OCI-LY7 (cell line): ENCODE measurements at regions of chr7 and their contacts with region 1.

Region 1: GRCh38 chr7:25125137-25125946 is at the start of gene CYCS:
- DNase-seq: peak; percentile 100
- H3K4me3 ChIP-seq: peak within 1 kb of the TSS; percentile 89
- H3K27ac ChIP-seq: peak within 1 kb of the TSS; percentile 68
- H3K4me1 ChIP-seq: peaks cover 24% of the 10 kb centered on the region
- CTCF ChIP-seq: no peak
- total RNA-seq, gene CYCS: 65.2 and 68.7 TPM in 2 replicates

Region 2: GRCh38 chr7:24741691-24742504 is 383.4 kb before region 1 on chr7:
- CTCF ChIA-PET with region 1: interaction called, 11 read pairs
- POLR2A ChIA-PET with region 1: no interaction called
- intact Hi-C with region 1: no loop called
- DNase-seq: no peak
- H3K4me3 ChIP-seq: no peak overlapping the region
- H3K27ac ChIP-seq: no peak overlapping the region
- H3K4me1 ChIP-seq: no peaks in the 10 kb centered on the region
- CTCF ChIP-seq: no peak

Region 3: GRCh38 chr7:25143763-25144162 is 18.4 kb after region 1 on chr7:
- CTCF ChIA-PET with region 1: no interaction called
- POLR2A ChIA-PET with region 1: interaction called, 12 read pairs
- intact Hi-C with region 1: no loop called
- DNase-seq: no peak
- H3K4me3 ChIP-seq: no peak overlapping the region
- H3K27ac ChIP-seq: no peak overlapping the region
- H3K4me1 ChIP-seq: no peaks in the 10 kb centered on the region
- CTCF ChIP-seq: no peak

Region 4: DNA sequence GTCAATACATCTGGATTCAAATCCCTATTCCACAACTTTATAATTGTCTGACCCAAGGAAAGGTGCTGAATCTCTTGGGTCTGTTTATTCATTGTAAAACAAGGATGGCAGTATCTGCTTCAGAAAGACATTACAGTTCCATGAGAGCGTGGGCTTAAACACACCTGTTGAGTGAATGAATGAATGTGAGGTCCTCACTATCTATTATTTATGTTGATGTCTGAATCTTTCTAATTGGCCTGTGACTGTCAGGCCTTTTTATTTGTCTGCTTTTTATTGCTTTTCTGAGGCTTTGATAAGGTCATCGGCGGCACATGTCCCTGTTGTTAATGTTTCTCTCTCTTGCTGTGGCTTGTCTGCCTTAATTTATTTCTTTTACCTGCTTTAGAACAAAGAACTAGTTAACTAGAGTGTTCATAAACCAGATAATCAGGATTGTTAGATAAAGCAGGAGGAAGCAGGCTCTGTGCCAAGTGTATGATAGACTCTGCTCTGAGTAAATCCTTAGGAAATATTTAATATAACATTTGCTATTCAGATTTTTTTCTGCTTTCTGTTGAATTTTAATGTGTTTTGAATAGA is 42.0 kb after region 1 on chr7:
- CTCF ChIA-PET with region 1: no interaction called
- POLR2A ChIA-PET with region 1: no interaction called
- intact Hi-C with region 1: no loop called
- DNase-seq: no peak
- H3K4me3 ChIP-seq: no peak overlapping the region
- H3K27ac ChIP-seq: no peak overlapping the region
- H3K4me1 ChIP-seq: no peaks in the 10 kb centered on the region
- CTCF ChIP-seq: no peak

Region 5: GRCh38 chr7:25179771-25180591 is 54.6 kb after region 1 on chr7:
- CTCF ChIA-PET with region 1: interaction called, 5 read pairs
- POLR2A ChIA-PET with region 1: interaction called, 4 read pairs
- intact Hi-C with region 1: loop called (anchors 1 kb)
- DNase-seq: peak; percentile 97
- H3K4me3 ChIP-seq: peak overlapping the region; percentile 78
- H3K27ac ChIP-seq: peak overlapping the region; percentile 57
- H3K4me1 ChIP-seq: peaks cover 9% of the 10 kb centered on the region
- CTCF ChIP-seq: peak; percentile 78